AG04450 (cell line): ENCODE measurements at regions of chr9 and their contacts with region 1.

Region 1: DNA sequence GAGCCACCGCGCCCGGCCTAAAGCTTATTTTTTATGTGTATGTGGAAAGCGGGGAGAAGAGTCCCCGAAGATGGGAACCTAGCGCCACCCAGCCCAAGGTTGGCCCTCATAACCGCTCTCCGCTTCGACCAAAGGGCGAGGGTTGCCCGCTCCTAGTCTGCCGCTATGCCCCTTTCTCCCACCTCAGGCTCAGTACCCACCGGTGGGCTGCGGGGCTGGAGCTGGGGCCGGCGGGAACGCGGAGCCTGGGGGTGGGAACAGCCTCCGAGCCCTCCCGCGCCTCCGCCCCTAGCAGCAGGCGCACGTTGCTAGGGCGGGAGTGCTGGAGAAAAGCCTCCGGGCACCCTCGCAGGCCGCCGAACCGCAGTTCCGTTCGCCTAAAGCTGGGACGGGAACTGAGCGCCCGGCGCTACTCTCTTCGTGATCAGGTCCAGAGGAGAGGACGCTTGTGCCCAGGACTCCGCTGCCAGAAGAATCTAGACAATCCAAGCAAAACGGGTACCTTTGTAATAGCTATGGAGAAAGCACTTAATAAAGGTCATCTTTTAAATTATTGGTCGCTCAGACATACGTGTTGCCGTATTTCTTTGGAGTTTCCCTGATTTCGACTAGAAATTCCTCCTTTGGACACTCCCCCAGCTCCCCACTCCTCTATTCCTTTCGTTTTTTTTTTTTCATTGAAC is at the start of gene WDR31:
- DNase-seq: peak; percentile 74
- H3K4me3 ChIP-seq: peak within 1 kb of the TSS; percentile 89
- H3K27ac ChIP-seq: peak within 1 kb of the TSS; percentile 34
- H3K27me3 ChIP-seq: no peaks in the 10 kb centered on the region
- CTCF ChIP-seq: no peak
- polyA plus RNA-seq, gene WDR31: 0.97 and 1.5 TPM in 2 replicates

Region 2: GRCh38 chr9:112945620-112946208 is 394.4 kb before region 1 on chr9:
- CTCF ChIA-PET with region 1: no interaction called
- POLR2A ChIA-PET with region 1: no interaction called
- DNase-seq: no peak
- H3K4me3 ChIP-seq: no peak overlapping the region
- H3K27ac ChIP-seq: no peak overlapping the region
- H3K27me3 ChIP-seq: peaks cover 2% of the 10 kb centered on the region
- CTCF ChIP-seq: no peak

Region 3: GRCh38 chr9:113401027-113401792 is 61.1 kb after region 1 on chr9 and contains the start of gene ALAD:
- CTCF ChIA-PET with region 1: interaction called, 11 read pairs
- POLR2A ChIA-PET with region 1: interaction called, 8 read pairs
- DNase-seq: peak; percentile 94
- H3K4me3 ChIP-seq: peak within 1 kb of the TSS; percentile 94
- H3K27ac ChIP-seq: peak within 1 kb of the TSS; percentile 39
- H3K27me3 ChIP-seq: no peaks in the 10 kb centered on the region
- CTCF ChIP-seq: peak; percentile 90
- polyA plus RNA-seq, gene ALAD: 11.8 and 15.9 TPM in 2 replicates

Region 4: GRCh38 chr9:113410207-113410864 is 70.2 kb after region 1 on chr9 and contains the starts of genes C9orf43 and POLE3:
- CTCF ChIA-PET with region 1: interaction called, 4 read pairs
- POLR2A ChIA-PET with region 1: interaction called, 13 read pairs
- DNase-seq: peak; percentile 86
- H3K4me3 ChIP-seq: peak within 1 kb of the TSS; percentile 97
- H3K27ac ChIP-seq: peak within 1 kb of the TSS; percentile 98
- H3K27me3 ChIP-seq: no peaks in the 10 kb centered on the region
- CTCF ChIP-seq: no peak
- polyA plus RNA-seq, gene C9orf43: 0.50 and 0.56 TPM in 2 replicates
- polyA plus RNA-seq, gene POLE3: 36.4 and 45.3 TPM in 2 replicates